ENCODE measurements at regions of chr14 and their contacts with region 1.

Region 1: DNA sequence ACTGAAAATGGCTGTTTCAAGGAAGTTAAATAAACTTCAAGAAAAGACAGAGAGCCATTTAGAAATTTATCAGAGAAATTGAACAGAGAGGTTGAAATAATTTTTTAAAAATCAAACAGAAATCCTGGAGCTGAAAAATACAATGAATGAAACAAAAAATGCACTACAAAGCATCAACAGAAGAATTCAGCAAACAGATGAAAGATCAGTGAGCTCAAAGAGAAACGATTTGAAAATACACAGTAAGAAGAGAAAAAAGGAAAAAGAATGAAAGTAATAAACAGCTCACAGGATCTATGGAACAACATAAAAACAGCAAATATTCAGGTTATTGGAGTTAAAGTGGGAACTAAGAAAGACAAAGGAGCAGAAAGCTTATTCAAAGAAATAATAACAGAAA is 26.2 kb downstream of the COX16 start:
- DNase-seq: no peak
- ATAC-seq: no peak
- H3K4me3 ChIP-seq: no peak overlapping the region
- H3K4me3 Mint-ChIP-seq: no peak overlapping the region
- H3K27ac ChIP-seq: no peak overlapping the region
- H3K27ac Mint-ChIP-seq: no peak overlapping the region
- H3K4me1 ChIP-seq: no peaks in the 10 kb centered on the region
- H3K4me1 Mint-ChIP-seq: no peaks in the 10 kb centered on the region
- H3K27me3 ChIP-seq: no peaks in the 10 kb centered on the region
- H3K27me3 Mint-ChIP-seq: no peaks in the 10 kb centered on the region
- CTCF ChIP-seq: no peak

Region 2: DNA sequence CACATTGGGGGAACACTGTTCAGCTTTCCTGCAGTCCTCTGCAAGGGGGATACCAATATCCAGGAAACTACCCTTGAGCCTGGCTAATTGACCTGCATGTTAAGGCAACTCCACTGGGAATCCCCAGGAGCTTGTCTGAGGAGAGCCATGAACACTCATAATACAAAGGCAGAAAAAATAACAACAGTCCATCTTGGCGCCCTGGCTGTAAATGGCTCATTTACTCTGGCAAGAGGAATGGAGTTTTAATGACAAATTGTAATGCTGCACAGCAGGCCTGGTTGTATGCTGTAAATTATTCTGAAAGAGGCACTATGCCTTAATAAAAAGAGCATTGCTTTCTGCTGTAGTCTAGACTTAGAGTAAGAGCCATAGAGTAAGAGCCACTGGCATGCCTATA is 202.8 kb before region 1 on chr14:
- CTCF ChIA-PET with region 1: no interaction called
- POLR2A ChIA-PET with region 1: no interaction called
- intact Hi-C with region 1: no loop called
- DNase-seq: no peak
- ATAC-seq: no peak
- H3K4me3 ChIP-seq: no peak overlapping the region
- H3K4me3 Mint-ChIP-seq: no peak overlapping the region
- H3K27ac ChIP-seq: no peak overlapping the region
- H3K27ac Mint-ChIP-seq: no peak overlapping the region
- H3K4me1 ChIP-seq: no peaks in the 10 kb centered on the region
- H3K4me1 Mint-ChIP-seq: no peaks in the 10 kb centered on the region
- H3K27me3 ChIP-seq: peaks cover 0 to 6% (median 2%) of the 10 kb centered on the region in 4 experiments
- H3K27me3 Mint-ChIP-seq: peaks cover 26% of the 10 kb centered on the region
- CTCF ChIP-seq: no peak

Region 3: DNA sequence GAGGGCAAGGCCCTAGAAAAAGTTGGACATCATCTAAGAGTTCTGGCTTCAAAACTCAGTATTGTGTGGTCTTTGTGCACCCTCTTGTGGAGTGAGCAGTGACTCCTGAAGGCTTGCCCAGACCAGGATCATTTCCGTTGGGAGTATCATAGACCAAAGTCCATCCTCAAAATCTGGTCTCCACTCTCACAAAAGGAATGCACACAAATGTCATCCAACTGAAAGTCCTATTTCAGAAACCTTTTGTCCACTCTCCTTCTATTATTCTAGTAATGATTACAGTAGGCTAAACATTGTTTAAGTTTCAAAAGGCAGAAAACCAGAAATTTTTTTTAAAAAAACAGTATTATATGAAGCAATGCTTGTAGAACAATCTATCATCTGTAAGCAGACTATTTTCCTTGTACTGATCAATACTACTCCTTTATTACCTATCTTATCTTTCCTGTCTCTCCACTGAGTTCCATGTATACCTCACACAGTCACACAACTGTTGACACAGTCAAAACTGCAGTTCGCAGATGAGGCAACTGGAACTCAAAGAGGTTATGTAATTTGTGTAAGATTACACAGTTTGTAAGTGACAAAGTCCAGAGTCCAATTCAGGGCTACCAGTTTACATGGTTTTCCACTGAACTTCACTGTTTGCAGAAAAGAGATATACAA is 15.2 kb before region 1 on chr14:
- CTCF ChIA-PET with region 1: no interaction called
- POLR2A ChIA-PET with region 1: no interaction called
- intact Hi-C with region 1: loop called (anchors 1 kb)
- DNase-seq: peak; percentile 14
- ATAC-seq: no peak
- H3K4me3 ChIP-seq: no peak overlapping the region
- H3K4me3 Mint-ChIP-seq: no peak overlapping the region
- H3K27ac ChIP-seq: no peak overlapping the region
- H3K27ac Mint-ChIP-seq: no peak overlapping the region
- H3K4me1 ChIP-seq: no peaks in the 10 kb centered on the region
- H3K4me1 Mint-ChIP-seq: no peaks in the 10 kb centered on the region
- H3K27me3 ChIP-seq: no peaks in the 10 kb centered on the region
- H3K27me3 Mint-ChIP-seq: peaks cover 15% of the 10 kb centered on the region
- CTCF ChIP-seq: peak; percentile 16

Measured in B cell (primary cell).